ENCODE measurements at regions of chr19 and their contacts with region 1.

Region 1: GRCh38 chr19:50933640-50934039 is 19.2 kb downstream of the KLK5 start:
- DNase-seq: no peak
- ATAC-seq: peak in 1 of 2 donors; percentile 44

Region 2: DNA sequence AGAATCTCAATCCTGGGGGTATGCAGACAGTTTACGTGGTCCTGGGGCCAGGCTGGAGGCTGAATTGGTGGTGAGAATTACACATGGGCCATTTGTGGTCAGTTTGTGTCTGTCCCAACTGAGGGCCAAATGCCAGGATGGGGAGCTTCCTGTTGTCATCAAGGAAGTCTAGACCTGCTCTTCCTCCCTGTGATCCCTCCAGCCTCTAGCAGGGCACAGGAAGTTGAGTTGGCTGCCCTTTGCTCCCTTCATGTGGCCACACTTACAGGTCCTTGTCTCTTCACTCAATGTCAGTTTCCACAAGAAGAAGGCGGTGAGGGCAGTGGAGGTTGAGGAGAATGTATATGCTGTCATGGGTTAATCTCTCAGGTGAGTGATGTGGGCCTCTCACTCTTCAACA is 238.6 kb after region 1 on chr19:
- intact Hi-C with region 1: loop called (anchors 5 to 10 kb)
- DNase-seq: no peak
- ATAC-seq: no peak

Region 3: DNA sequence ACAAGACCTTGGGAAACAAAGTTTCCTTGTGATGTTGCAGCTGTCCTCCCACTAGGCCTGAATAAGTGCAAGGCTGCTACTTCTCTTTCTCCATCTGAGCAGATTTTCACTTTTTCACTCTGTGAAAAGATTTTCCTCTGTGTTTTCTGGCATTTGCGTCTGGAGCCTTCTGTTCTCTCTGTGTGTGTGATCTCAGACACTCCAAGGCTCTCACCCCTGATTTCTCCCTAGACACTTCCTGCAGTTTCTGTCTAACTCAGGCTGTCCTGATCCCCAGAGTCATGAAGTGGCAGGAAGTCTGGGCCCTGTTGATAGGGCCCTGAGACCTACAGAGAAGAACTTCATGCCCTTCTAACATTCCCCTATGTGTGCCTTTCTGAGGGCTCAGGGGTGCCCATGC is 245.6 kb after region 1 on chr19:
- intact Hi-C with region 1: loop called (anchors 5 to 10 kb)
- DNase-seq: no peak
- ATAC-seq: no peak

Measured in left cardiac atrium (tissue), 4 donors.